Activated naive CD4-positive, alpha-beta T cell treated with anti-CD3 and anti-CD28 coated beads, Interleukin-2, amount 10 ng/mL, durations not matched to agents 7 days and 5 days (primary cell): ENCODE measurements at regions of chr4 and their contacts with region 1.

Region 1: DNA sequence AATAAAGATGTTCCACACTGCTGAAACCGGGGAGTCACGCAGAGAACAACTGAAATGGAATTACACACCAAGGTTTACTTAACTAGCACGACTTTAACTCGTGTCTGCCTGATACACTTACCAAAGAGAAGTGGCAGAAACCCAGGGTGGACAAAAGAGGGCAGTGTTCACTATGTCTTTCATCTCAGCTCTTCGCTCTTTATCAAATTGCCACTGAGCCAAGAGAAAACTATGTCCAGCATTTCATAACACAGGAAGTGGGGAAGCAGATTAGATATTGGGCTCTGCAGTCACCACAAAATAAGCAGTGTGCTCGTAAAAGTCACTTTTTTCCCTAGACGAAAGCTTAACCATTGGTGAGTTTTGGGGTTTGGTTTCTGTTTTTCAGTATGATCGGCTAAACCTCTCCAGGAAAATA is 155.7 kb downstream of the CHIC2 start:
- DNase-seq: peak; percentile 22
- H3K4me3 Mint-ChIP-seq: no peak overlapping the region
- H3K27ac Mint-ChIP-seq: no peak overlapping the region
- H3K4me1 Mint-ChIP-seq: peaks cover 11% of the 10 kb centered on the region
- H3K27me3 Mint-ChIP-seq: peaks cover 39% of the 10 kb centered on the region

Region 2: GRCh38 chr4:53943345-53944085 is 34.8 kb after region 1 on chr4:
- CTCF ChIA-PET with region 1: no interaction called
- DNase-seq: no peak
- H3K4me3 Mint-ChIP-seq: no peak overlapping the region
- H3K27ac Mint-ChIP-seq: no peak overlapping the region
- H3K4me1 Mint-ChIP-seq: no peaks in the 10 kb centered on the region
- H3K27me3 Mint-ChIP-seq: peaks cover 6% of the 10 kb centered on the region

Region 3: GRCh38 chr4:54228056-54228527 is 319.4 kb after region 1 on chr4:
- CTCF ChIA-PET with region 1: interaction called, 63 read pairs
- DNase-seq: peak; percentile 50
- H3K4me3 Mint-ChIP-seq: peak overlapping the region; percentile 15
- H3K27ac Mint-ChIP-seq: peak overlapping the region; percentile 52
- H3K4me1 Mint-ChIP-seq: peaks cover 39% of the 10 kb centered on the region
- H3K27me3 Mint-ChIP-seq: peaks cover 99% of the 10 kb centered on the region